Vagina (tissue), 2 donors: ENCODE measurements at regions of chr7 and their contacts with region 1.

Region 1: DNA sequence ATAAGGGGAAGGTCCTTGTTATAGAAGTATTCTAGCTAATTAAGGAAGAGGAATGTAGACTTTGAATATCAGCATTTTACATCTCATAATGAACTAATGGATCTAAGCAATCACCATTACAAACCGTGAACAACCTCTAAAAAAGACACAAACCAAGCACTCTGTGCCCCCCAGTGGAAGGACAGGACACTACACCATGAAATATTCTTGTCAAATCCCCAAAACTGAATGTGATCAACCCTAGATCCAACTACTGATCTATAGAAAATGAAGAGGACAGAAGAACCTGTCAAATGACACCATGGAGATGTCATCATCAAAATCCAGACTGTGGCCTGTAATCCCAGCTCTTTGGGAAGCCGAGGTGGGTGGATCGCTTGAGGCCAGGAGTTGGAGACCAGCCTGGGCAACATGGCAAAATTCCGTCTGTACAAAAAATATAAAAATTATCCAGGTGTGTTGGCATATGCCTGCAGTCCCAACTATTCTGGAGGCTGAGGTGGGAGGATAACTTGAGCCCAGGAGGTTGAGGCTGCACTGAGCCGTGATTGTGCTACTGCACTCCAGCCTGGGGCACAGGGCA is 111.3 kb upstream of the CARD11 start:
- DNase-seq: no peak
- H3K4me3 ChIP-seq: no peak overlapping the region
- H3K27ac ChIP-seq: no peak overlapping the region
- H3K4me1 ChIP-seq: no peaks in the 10 kb centered on the region
- H3K27me3 ChIP-seq: no peaks in the 10 kb centered on the region
- CTCF ChIP-seq: peak in 2 of 3 experiments; percentile 14 to 49
- POLR2A ChIP-seq: no peak

Region 2: DNA sequence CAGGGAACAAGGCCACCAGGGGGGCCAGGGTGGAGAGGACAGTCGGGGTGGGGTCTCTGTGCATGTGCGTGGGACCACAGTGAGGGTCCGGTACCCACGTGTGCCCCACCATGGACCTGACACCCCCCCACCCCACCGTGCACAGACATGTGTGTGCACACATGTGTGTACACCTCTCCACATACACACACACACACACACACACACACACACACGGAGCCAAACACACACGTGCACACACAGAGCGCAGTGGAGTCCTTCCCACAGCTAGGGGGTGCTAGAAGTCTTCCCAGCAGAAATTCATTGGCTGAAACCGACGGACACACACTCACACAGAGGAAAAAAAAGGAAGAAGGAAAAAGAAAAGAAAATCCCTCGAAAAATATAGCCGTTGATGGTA is 268.1 kb before region 1 on chr7:
- intact Hi-C with region 1: loop called (anchors 10 kb)
- DNase-seq: no peak
- H3K4me3 ChIP-seq: no peak overlapping the region
- H3K27ac ChIP-seq: no peak overlapping the region
- H3K4me1 ChIP-seq: no peaks in the 10 kb centered on the region
- H3K27me3 ChIP-seq: no peaks in the 10 kb centered on the region
- CTCF ChIP-seq: peak; percentile 39 to 64 (median 56)
- POLR2A ChIP-seq: no peak

Region 3: GRCh38 chr7:3013975-3014792 is 140.8 kb before region 1 on chr7:
- intact Hi-C with region 1: no loop called
- DNase-seq: no peak
- H3K4me3 ChIP-seq: no peak overlapping the region
- H3K27ac ChIP-seq: no peak overlapping the region
- H3K4me1 ChIP-seq: no peaks in the 10 kb centered on the region
- H3K27me3 ChIP-seq: no peaks in the 10 kb centered on the region
- CTCF ChIP-seq: no peak
- POLR2A ChIP-seq: no peak